ENCODE measurements at regions of chr17 and their contacts with region 1.

Region 1: DNA sequence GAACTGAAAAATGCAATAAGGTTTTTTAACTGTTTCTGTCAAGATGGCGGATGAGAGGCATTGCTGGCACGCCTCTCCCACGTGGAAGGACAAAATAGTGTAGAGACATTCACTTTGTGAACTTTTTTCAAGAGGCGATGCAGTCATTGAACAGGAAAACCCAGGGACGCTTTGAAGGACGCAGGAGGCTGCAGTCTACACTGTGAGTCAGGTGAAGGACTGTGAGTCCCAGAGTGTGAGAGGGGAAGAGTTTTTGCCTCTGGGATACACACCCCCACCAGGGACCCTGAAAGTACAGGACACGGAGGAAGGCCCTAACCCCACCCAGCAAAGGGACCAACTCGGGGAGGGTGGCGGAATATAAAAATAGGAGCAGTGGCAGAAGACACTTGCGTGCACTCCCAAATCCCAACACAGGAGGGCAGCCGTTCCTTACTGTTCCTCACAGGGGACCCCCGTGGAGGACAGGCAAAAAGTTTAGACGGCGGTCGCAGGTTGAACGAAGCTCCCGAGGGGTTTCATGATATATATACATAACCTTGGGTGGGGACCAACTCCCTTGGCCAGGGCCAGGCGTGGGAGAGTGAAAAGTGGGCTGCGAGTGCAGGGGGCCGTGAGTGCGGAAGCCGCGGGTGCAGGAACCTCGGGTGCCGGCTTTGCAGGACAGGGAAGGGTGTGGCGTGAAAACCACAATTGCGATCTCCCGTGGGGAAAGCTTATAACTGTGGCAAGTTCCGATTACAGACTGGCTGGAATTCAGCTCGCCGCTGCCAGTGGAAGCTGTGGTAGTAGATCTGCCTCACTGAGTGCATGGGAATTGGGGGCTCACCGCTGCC is 82.0 kb upstream of the ALOX12 start:
- DNase-seq: peak; percentile 87

Region 2: GRCh38 chr17:6936370-6937028 is 22.7 kb after region 1 on chr17:
- intact Hi-C with region 1: loop called in 1 of 2 experiments (anchors 1 kb)
- DNase-seq: no peak

Region 3: DNA sequence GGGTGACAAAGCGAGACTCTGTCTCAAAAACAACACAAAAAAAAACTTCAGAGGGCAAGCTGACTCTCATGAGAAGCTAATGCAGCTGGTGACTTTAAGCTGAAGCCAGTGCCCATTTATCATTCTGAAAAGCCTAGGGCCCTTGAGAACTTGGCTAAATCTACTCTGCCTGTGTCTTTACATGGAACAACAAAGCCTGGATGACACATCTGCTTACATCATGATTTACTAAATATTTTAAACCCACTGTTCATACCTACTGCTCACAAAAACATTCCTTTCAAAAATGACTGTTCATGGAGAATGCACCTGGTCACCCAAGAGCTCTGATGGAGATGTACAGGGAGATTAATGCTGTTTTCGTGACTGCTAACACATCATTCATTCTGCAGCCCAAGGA is 76.0 kb after region 1 on chr17:
- intact Hi-C with region 1: no loop called
- DNase-seq: no peak

Region 4: DNA sequence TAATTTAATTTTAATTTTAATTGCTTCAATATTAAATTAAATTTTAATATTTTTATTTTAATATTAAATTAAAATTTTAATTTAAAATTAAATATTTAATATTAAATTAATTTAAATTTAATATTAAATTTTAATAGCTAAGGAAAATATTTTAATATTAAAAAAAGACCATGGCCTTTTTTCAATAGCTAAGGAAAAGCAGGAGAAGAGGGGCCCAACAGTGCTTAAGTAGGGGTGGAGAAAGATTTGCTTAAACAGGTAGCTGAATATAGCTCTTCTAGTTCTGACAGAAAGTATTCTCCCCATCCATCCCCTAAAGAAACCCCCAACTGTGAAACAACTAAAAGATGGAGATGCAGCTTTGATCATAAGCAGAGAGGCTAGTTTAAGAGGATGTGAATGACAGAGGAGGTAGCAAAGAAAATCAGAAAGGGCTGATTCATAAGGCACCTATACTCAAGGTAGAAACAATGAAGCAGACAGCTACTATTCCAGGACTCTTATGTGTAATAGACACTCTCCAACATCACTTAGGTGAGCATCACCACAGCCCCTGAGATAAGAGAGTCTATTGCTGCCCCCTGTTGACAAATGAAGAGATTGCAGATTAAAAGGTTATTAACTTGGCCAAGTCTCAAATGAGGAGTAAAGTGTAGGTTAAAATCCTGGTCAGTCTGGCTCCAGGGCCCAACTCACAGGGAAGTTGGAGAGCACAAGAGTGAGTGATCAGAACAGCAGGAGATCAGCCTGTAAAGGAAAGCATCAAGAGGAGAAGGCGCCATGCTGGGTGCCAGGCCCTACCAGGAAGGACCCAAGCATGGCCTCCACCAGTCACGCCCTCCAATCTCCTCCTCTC is 90.8 kb after region 1 on chr17:
- intact Hi-C with region 1: loop called (anchors 5 kb)
- DNase-seq: no peak